A549 (cell line): ENCODE measurements at regions of chr2 and their contacts with region 1.

Region 1: GRCh38 chr2:199471443-199472057 is 13.8 kb upstream of the SATB2 start:
- DNase-seq: peak in 1 of 2 experiments; percentile 71
- ATAC-seq: peak; percentile 97 to 99
- H3K4me3 ChIP-seq: peak overlapping the region; percentile 35
- H3K27ac ChIP-seq: peak overlapping the region in 1 of 2 experiments; percentile 80; a peak in 3 of 6 replicates
- H3K4me1 ChIP-seq: no peaks in the 10 kb centered on the region
- CTCF ChIP-seq: peak; percentile 69
- EP300 ChIP-seq: no peak
- POLR2A ChIP-seq: no peak
- RAD21 ChIP-seq: peak in 1 of 2 experiments; percentile 46; a peak in 2 of 5 replicates

Region 2: DNA sequence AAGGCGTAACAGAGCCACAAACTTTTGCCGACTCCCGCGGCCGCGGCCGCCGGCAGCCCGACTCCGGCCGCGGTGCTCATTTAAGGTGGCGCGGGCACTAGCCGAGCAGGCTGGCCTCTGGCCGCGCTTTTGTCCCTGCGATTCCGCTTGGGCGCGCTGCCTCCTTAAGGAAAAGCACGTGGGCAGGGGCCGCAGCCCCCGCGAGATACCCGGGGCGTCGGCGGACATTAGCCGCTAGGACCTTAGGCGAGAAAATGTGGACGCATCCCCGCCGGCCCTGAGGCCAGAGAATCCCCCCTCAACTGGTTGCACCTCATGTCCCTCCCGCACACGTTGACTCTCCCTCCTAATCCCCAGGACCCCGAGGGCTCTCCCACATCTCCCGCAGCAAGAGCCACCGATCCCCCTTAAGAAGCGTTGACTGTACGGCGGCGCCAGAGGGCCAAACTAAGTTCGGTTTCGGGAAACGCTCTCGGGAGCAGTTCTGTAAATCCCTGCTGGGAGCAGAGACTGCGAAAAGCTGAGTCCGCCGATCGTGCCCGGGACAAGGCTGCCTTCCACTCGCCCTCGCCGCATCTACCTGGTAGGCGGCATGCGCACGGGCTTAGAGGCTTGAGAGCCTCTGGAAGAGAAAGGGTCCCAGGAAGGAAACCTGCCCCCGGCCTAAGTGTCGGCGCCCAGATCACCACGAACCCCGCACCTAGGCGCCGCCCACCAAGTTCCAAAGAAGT is 12.1 kb before region 1 on chr2:
- CTCF ChIA-PET with region 1: interaction called, 6 read pairs
- POLR2A ChIA-PET with region 1: interaction called, 15 read pairs
- DNase-seq: peak; percentile 71 to 96
- ATAC-seq: peak; percentile 57 to 73
- H3K4me3 ChIP-seq: peak overlapping the region; percentile 83
- H3K27ac ChIP-seq: peak overlapping the region; percentile 97 to 98
- H3K4me1 ChIP-seq: peaks cover 17% of the 10 kb centered on the region
- CTCF ChIP-seq: no peak
- EP300 ChIP-seq: no peak
- POLR2A ChIP-seq: peak; percentile 14
- RAD21 ChIP-seq: no peak